ENCODE measurements at regions of chr20 and their contacts with region 1.

Region 1: DNA sequence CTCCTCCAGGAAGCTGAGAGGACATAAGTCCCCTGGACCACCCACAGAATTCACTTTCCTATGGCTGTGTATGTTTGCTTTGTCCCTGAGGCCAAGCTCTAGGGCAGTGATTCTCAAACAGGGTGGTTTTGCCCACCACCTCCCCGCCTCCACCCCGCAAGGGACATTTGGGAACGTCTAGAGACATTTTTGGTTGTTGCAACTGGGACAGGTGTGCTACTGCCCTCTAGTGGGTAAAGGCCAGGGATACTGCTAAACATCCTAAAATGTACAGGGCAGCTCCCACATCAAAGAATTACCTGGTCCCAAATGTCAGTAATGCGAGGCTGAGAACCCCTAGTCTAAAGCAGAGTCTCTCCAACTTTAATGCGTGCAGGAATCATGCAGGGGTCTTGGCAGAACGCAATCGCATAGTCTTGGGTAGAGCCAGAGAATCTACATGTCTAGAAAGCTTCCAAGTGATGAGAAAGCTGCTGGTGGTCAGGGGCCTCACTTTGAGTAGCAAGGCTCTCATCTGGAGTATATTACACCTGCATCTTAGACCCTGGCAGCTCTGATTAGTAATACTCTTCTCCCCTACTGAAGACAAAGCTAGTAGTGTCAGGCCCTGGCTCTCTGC is 5.1 kb downstream of the KCNS1 start:
- DNase-seq: peak; percentile 28
- H3K4me3 Mint-ChIP-seq: no peak overlapping the region
- H3K27ac Mint-ChIP-seq: no peak overlapping the region
- H3K4me1 Mint-ChIP-seq: peaks cover 4% of the 10 kb centered on the region
- H3K27me3 Mint-ChIP-seq: peaks cover 35% of the 10 kb centered on the region

Region 2: DNA sequence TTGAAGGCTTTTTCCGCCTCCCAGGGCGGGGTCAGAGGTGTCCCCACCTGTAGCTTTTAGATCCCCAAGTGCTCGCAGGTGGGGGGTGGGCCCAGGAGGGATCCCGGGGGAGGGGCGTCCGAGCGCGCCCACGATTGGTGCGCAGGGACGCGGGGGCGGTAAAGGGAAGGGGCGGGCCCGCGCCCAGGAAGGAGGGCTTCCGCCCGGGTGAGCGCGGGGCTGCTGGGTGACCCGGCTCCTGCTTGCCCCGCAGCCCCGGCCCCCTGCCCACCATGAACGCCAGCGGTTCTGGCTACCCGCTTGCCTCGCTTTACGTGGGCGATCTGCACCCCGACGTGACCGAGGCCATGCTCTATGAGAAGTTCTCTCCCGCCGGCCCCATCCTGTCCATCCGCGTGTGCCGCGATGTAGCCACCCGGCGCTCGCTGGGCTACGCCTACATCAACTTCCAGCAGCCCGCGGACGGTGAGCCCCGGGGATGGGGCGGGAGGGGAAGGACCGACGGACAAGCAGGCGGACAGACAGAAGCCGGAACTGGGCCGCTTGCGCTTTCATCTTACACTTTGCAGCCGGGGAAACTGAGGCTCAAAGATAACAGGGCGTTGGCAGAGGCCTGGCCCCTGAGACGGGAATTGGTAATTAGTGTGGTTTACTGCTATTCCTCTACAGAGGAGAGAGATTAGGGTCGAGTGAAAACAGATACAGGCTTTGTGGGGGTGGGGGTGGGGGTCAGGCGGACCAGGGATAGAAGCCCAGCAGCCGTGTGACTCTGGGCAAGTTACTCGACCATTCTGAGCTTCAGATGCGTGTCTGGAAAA is 185.8 kb before region 1 on chr20 and contains the start of gene PABPC1L:
- intact Hi-C with region 1: loop called (anchors 5 kb)
- DNase-seq: peak; percentile 68
- H3K4me3 Mint-ChIP-seq: peak within 1 kb of the TSS; percentile 86
- H3K27ac Mint-ChIP-seq: peak within 1 kb of the TSS; percentile 58
- H3K4me1 Mint-ChIP-seq: peaks cover 27% of the 10 kb centered on the region
- H3K27me3 Mint-ChIP-seq: no peaks in the 10 kb centered on the region
- total RNA-seq, gene PABPC1L: 83.6 and 94.1 TPM in 2 replicates

Region 3: DNA sequence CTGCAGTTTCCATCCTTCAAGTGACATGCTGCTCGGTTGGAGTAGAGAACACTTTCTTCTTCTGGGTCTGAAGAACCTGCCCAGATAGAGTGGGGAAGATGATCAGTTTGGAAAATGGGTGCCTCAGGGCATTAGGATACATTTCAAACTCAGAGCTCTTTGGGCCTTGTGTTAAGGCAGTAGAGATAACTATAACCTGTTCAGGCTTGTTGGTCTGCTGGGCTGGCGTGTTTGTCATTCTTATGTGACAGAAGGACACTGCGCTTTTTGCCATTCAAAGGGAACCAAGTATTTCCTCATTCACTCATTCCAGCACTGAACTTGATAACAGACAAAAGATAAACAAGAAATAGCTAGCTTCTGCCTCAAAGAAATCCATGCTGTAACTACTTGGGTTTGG is 139.5 kb before region 1 on chr20:
- intact Hi-C with region 1: no loop called
- DNase-seq: no peak
- H3K4me3 Mint-ChIP-seq: no peak overlapping the region
- H3K27ac Mint-ChIP-seq: no peak overlapping the region
- H3K4me1 Mint-ChIP-seq: peaks cover 48% of the 10 kb centered on the region
- H3K27me3 Mint-ChIP-seq: no peaks in the 10 kb centered on the region

Region 4: DNA sequence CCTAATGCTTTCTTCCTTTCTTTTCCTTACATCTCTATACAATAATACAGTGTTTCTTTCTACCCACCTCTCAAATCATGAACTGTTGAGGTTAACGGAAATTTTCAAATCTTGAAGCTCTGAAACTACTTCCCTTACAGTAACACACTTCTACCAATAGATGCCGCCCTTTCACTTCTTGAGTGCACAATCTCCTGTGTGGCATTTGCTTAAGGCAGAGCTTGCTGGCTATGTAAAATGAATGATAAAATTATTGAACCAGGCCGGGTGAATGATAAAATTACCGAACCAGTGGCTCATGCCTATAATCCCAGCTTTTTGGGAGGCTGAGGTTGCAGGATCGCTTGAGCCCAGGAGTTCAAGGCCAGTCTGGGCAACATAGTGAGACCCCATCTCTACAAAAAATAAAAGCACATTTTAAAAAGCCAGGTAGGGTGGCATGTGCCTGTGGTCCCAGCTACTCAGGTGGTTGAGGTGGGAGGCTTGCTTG is 51.7 kb before region 1 on chr20:
- intact Hi-C with region 1: loop called (anchors 1 kb)
- DNase-seq: no peak
- H3K4me3 Mint-ChIP-seq: no peak overlapping the region
- H3K27ac Mint-ChIP-seq: peak overlapping the region; percentile 66
- H3K4me1 Mint-ChIP-seq: peaks cover 34% of the 10 kb centered on the region
- H3K27me3 Mint-ChIP-seq: no peaks in the 10 kb centered on the region

Region 5: GRCh38 chr20:45293041-45294002 is 197.5 kb after region 1 on chr20:
- intact Hi-C with region 1: loop called (anchors 5 kb)
- DNase-seq: peak; percentile 78
- H3K4me3 Mint-ChIP-seq: peak overlapping the region; percentile 69
- H3K27ac Mint-ChIP-seq: no peak overlapping the region
- H3K4me1 Mint-ChIP-seq: peaks cover 8% of the 10 kb centered on the region
- H3K27me3 Mint-ChIP-seq: peaks cover 27% of the 10 kb centered on the region

Measured in activated T-helper 2 cell treated with anti-CD3 and anti-CD28 coated beads, Interferon-gamma antibody, Interleukin-2, Interleukin-4, amounts not matched to agents 10 μg/mL and 5 μg/mL and 100 μg/mL, durations not matched to agents 14 hours and 24 hours and 36 hours (primary cell).